ENCODE measurements at regions of chr4 and their contacts with region 1.

Region 1: GRCh38 chr4:155953151-155954114 is at the start of gene CTSO:
- DNase-seq: peak; percentile 66
- ATAC-seq: peak; percentile 91
- H3K4me3 Mint-ChIP-seq: peak within 1 kb of the TSS; percentile 99
- H3K27ac Mint-ChIP-seq: peak within 1 kb of the TSS; percentile 99
- H3K4me1 Mint-ChIP-seq: peaks cover 26% of the 10 kb centered on the region
- H3K27me3 Mint-ChIP-seq: peaks cover 10% of the 10 kb centered on the region
- CTCF ChIP-seq: no peak
- total RNA-seq, gene CTSO: 12.6 and 12.9 TPM in 2 replicates

Region 2: DNA sequence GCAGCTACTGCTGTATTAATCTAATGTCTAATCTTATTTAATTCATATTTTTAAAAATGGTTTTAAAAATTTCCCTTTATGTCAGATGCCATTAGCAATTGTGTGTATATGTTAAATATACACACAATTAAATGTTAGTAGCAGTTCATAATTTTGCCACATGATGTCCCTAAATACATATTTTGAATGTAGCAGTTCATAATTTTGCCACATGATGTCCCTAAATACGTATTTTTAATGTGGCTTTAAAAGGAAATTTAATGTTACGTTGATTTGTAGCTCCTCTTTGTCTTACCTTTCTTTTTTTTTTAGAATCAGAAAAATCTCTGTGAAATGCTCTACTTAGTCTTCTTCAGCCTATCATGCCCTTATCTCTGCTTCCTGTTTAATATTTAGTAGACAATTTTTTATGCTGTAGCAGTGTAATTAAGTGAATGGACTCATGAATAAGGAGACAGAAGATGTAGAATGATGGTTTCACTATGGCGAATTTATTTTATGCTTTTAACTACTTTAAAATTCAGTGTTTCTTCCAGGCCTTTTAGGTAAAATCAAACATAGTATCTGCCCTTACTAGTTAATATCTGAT is 1146.3 kb before region 1 on chr4:
- CTCF ChIA-PET with region 1: no interaction called
- POLR2A ChIA-PET with region 1: no interaction called
- intact Hi-C with region 1: loop called (anchors 5 kb)
- DNase-seq: no peak
- ATAC-seq: no peak
- H3K4me3 Mint-ChIP-seq: no peak overlapping the region
- H3K27ac Mint-ChIP-seq: no peak overlapping the region
- H3K4me1 Mint-ChIP-seq: no peaks in the 10 kb centered on the region
- H3K27me3 Mint-ChIP-seq: no peaks in the 10 kb centered on the region
- CTCF ChIP-seq: no peak

Region 3: DNA sequence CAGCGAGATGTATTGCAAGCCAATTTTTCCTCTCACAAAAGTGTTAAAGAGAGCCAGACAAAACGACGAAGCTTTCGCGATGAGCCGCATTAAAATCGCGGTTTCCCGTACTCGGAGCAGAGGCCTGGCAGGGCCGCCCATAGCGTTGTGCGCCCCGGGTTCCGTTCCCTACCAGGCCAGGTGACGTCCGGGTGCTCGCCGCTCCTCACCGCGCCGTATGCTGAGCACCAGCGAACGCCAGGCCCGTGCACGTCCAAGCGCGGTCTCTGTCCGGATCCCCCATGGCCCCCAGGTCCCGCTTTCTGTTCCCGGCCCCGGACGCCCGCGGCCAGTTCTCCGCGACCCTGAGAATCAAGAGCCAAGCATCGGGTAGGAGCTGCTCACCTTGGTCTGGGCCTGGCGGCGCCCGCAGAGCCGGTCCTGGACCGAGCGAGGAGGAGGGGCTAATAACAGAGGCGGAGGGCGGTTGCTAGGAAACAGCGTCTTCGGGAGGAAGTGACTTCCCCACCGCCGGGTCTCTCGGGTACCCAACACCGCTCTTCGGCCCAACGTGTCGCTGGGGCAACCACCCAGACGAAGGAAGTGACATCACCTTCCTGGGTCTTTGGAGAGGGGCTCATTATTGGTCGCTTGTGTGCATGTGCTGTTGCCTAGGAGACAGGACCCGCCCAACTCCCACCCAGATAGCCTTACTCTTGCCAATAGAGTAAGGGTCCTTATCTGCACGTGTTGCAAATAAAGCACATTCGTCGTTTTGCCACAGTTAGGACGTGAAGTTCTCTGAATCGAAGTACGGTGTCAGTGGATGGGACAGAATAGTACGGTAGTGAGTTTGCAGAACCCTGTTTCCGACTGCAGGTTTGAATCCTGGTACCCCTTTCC is 576.8 kb before region 1 on chr4 and contains the start of gene MAP9:
- CTCF ChIA-PET with region 1: no interaction called
- POLR2A ChIA-PET with region 1: no interaction called
- intact Hi-C with region 1: loop called (anchors 1 kb)
- DNase-seq: peak; percentile 84
- ATAC-seq: peak; percentile 96
- H3K4me3 Mint-ChIP-seq: peak within 1 kb of the TSS; percentile 92
- H3K27ac Mint-ChIP-seq: peak within 1 kb of the TSS; percentile 92
- H3K4me1 Mint-ChIP-seq: peaks cover 15% of the 10 kb centered on the region
- H3K27me3 Mint-ChIP-seq: peaks cover 3% of the 10 kb centered on the region
- CTCF ChIP-seq: no peak
- total RNA-seq, gene MAP9: 8.8 and 10.7 TPM in 2 replicates

Region 4: DNA sequence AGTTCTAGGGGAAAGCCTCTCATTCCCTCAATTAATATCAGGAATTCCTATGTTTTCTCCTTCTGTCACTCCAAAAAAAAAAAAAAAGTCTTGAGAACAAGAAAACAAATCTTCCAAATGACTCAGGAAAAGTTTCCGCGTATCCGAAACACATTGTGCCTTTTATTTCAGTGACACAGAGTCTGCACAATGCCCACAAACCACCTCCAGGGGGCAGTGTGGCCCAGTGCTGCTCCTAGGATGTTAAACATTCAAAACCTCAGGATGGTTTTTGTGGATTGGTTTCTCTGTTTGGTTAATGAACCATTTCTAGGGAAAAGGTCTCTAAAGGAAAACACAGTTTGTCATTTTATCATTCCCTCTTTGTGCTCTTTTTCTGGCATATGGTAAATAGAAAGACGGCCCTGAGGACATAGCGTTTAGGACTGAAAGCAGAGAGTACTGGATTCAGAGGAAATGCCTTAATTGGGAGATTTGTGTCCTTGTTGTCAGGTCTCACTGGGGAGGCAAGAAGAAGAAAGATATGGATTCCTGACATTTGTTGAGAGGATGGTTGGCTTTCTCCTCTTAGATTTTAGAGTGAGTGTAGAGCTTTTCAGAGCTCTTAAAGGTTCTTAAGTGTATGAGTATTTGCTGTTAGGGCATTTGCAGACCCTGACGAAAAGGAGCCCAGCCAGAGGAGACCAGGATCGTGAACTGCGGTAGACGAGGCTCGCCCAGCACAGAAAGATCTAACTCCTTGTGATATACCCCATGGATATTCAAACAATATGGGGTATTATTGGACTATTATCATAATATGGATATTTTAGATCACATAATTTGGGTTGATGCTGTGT is 510.9 kb before region 1 on chr4:
- CTCF ChIA-PET with region 1: interaction called, 4 read pairs
- POLR2A ChIA-PET with region 1: no interaction called
- intact Hi-C with region 1: loop called (anchors 1 kb)
- DNase-seq: peak; percentile 36
- ATAC-seq: no peak
- H3K4me3 Mint-ChIP-seq: no peak overlapping the region
- H3K27ac Mint-ChIP-seq: no peak overlapping the region
- H3K4me1 Mint-ChIP-seq: no peaks in the 10 kb centered on the region
- H3K27me3 Mint-ChIP-seq: peaks cover 5% of the 10 kb centered on the region
- CTCF ChIP-seq: peak; percentile 46

Region 5: DNA sequence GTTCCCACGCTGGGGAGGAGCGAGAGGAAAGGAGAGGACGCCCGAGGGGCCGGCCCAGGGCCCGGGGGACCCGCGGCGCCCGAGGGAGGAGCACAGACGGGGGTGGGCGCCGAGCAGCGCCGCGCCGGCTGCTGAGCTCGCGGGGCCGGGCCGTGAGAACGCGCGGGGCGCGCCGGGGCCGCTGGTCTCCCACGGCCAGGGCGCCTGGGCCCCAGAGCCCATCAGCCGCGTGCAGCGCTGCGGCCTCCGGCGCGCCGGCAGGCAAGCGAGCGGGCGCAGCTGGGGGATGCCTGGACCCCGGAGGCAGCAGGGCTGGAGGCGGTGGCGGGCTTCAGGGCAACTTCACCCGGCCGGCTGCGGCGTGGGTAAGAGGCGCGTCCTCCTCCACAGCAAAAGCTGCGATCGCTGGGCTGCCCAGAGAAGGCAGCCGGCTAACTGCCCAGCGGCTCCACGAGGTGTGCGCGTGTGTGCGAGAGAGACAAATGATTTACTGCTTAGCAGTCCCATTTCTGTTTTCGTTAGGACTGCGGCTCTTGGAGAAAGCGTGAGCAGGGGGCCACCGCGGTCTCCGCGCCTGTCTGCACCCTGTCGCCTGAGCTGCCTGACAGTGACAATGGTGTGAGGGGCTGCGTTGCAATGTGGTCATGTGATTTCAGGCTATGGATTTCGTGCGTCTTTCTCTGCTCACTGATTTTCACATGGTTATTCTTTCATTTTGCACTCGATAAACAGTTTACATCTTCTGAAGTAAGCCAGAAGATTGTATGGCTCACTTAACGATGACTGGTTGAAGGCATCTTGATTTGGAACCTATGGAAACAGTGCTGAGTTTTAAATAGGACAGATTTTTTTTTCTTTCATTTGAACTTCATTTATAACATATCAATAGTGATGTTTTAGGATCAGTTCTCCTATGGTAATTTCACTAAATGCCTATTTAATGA is 285.6 kb before region 1 on chr4:
- CTCF ChIA-PET with region 1: no interaction called
- POLR2A ChIA-PET with region 1: no interaction called
- intact Hi-C with region 1: loop called (anchors 10 kb)
- DNase-seq: peak; percentile 16
- ATAC-seq: peak; percentile 56
- H3K4me3 Mint-ChIP-seq: peak overlapping the region; percentile 88
- H3K27ac Mint-ChIP-seq: no peak overlapping the region
- H3K4me1 Mint-ChIP-seq: peaks cover 16% of the 10 kb centered on the region
- H3K27me3 Mint-ChIP-seq: peaks cover 25% of the 10 kb centered on the region
- CTCF ChIP-seq: no peak

Region 6: DNA sequence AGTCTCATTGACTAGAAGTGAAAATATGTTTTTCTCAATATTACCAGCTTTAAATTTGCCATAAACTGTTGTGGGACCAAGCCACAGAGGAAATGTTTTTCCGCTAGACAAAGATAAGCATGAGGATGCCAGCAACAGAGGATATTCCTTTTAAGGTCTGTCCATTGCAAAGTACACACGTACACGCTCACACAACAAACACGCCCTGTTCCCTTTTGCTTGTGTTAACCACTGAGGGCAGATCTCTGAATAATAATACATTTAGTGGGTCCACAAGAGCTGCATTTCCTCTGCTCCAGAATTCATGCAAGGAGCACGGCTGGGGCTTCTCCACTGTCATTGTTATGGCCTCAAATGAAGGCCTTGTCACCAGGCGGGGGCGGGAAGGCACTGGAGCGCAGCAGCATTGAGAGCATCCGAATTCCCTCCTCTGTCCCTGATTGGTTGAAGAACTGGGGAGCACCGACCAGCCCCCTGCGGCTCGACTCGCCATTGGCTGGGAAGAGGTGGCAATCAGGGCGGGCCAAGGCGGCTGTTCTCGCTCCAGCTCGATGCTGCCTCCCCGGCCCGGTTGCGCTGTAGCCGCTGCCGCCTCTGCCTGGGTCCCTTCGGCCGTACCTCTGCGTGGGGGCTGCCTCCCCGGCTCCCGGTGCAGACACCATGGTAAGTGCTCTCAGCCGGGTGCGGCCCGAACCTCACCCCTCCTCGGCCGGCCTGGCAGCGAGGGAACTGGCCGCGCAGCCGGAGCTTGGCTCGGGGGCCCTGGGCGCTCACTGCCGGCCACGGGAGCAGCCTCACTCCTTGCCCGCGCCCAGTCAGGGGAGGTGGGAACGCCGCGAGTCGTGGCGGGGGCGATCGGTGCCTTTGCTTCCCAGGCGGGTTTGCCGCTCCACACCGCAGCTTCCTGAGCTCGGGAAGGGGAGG is 194.7 kb before region 1 on chr4 and contains the start of gene GUCY1B1:
- CTCF ChIA-PET with region 1: no interaction called
- POLR2A ChIA-PET with region 1: interaction called, 4 read pairs
- intact Hi-C with region 1: loop called (anchors 2 kb)
- DNase-seq: peak; percentile 64
- ATAC-seq: peak; percentile 97
- H3K4me3 Mint-ChIP-seq: peak within 1 kb of the TSS; percentile 68
- H3K27ac Mint-ChIP-seq: peak within 1 kb of the TSS; percentile 72
- H3K4me1 Mint-ChIP-seq: peaks cover 8% of the 10 kb centered on the region
- H3K27me3 Mint-ChIP-seq: peaks cover 20% of the 10 kb centered on the region
- CTCF ChIP-seq: no peak
- total RNA-seq, gene GUCY1B1: 0.22 and 0.39 TPM in 2 replicates

Region 7: DNA sequence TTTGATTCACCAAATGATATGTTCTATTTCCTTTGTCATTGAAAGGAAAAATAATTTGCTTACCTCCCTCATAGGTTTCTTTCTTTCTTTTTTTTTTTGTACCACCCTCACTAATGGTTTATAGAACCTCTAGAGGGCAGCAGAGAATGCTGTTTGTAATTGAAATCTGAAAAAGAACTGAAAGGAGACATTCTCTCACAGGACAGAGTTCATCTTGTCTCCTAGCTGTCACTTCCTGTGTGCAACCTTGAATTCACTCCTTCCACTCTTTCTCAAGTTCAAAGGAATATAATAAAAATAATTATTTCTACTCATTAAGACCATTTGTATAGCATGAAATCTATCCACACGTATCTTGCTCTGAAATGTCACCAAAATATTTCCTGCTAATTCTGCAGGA is 143.6 kb before region 1 on chr4:
- CTCF ChIA-PET with region 1: interaction called, 9 read pairs
- POLR2A ChIA-PET with region 1: no interaction called
- intact Hi-C with region 1: loop called (anchors 1 kb)
- DNase-seq: no peak
- ATAC-seq: peak; percentile 70
- H3K4me3 Mint-ChIP-seq: no peak overlapping the region
- H3K27ac Mint-ChIP-seq: no peak overlapping the region
- H3K4me1 Mint-ChIP-seq: no peaks in the 10 kb centered on the region
- H3K27me3 Mint-ChIP-seq: no peaks in the 10 kb centered on the region
- CTCF ChIP-seq: peak; percentile 69

Measured in activated B cell treated with CpG ODN at 0.5 μM for 24 hours (primary cell).